Endothelial cell of umbilical vein (primary cell): ENCODE measurements at regions of chr1 and their contacts with region 1.

Region 1: GRCh38 chr1:231421993-231422764 is at the start of gene EGLN1:
- DNase-seq: peak; percentile 95
- H3K4me3 ChIP-seq: peak within 1 kb of the TSS; percentile 63 to 97 (median 91)
- H3K27ac ChIP-seq: peak within 1 kb of the TSS; percentile 89
- H3K4me1 ChIP-seq: peaks cover 43% of the 10 kb centered on the region
- H3K27me3 ChIP-seq: no peaks in the 10 kb centered on the region
- CTCF ChIP-seq: peak; percentile 14 to 33
- POLR2A ChIP-seq: peak; percentile 84
- total RNA-seq, gene EGLN1: 37.4 and 38.1 TPM in 2 replicates

Region 2: DNA sequence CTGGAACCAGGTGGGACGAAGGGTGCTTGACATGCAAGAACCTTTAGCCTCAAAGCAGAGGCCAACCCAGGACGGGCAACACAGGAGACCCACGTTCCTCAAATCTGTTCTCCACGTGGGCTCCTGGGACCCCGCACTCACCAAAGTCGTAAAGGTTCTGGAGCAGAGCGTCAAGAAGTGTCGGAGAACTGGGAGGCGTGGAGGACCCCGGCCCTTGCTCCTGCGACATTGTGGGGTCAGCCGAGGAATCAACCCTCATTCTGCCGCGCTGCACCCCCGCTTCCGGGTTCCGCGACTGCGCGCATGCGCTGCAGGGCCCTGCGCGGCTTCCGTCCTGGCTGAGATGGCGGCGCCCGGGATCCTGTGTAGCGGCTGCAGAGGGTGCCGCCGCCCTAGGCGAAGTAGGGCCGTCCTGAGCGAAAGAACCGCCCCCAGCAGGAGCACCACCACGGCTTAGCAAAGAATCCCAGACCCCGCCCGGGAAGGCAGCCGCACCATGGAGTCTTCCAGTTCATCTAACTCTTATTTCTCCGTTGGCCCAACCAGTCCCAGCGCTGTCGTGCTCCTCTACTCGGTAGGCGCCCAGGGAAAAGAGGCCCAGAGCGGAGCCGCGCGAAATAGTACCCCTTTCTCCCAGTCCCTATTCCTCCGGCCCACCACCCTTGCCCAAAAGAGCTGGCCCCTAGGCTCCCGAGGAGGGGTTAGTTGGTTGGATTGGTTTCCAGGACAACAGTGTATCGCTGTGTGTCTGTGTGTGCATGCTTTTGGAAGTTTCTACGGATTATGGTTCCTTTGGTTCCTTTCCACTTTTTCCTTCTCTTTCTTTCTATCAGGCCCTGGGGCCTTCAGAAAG is 181.1 kb before region 1 on chr1 and contains the start of gene GNPAT:
- CTCF ChIA-PET with region 1: no interaction called
- POLR2A ChIA-PET with region 1: no interaction called
- dilution Hi-C with region 1: no loop called
- intact Hi-C with region 1: loop called (anchors 5 kb)
- DNase-seq: peak; percentile 87
- H3K4me3 ChIP-seq: peak within 1 kb of the TSS; percentile 57 to 97 (median 94)
- H3K27ac ChIP-seq: peak within 1 kb of the TSS; percentile 59
- H3K4me1 ChIP-seq: peaks cover 19% of the 10 kb centered on the region
- H3K27me3 ChIP-seq: no peaks in the 10 kb centered on the region
- CTCF ChIP-seq: no peak
- POLR2A ChIP-seq: peak; percentile 94
- total RNA-seq, gene GNPAT: 44.1 and 51.4 TPM in 2 replicates

Region 3: DNA sequence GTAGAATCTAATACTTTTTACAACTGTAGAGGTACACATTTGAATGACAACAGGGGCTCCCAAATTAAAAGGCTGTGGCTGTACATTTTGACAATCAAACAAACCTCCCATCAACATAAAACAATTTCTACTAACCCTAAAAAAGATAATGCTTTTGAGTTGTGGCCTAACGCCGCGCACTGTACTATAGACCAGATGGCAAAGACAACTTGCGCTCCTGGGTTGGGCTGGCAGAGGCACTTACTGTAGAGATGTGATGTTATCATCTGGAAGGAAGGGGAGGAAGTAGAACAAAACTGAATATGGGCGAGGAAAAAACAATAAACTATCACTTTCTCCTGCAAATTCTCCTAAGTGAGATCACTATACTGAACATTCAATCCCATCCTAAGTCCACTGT is 58.0 kb before region 1 on chr1:
- CTCF ChIA-PET with region 1: interaction called, 39 read pairs
- POLR2A ChIA-PET with region 1: no interaction called
- dilution Hi-C with region 1: no loop called
- intact Hi-C with region 1: no loop called
- DNase-seq: no peak
- H3K4me3 ChIP-seq: no peak overlapping the region
- H3K27ac ChIP-seq: no peak overlapping the region
- H3K4me1 ChIP-seq: no peaks in the 10 kb centered on the region
- H3K27me3 ChIP-seq: no peaks in the 10 kb centered on the region
- CTCF ChIP-seq: no peak
- POLR2A ChIP-seq: no peak

Region 4: GRCh38 chr1:231395076-231395995 is 26.8 kb before region 1 on chr1:
- CTCF ChIA-PET with region 1: interaction called, 4 read pairs
- POLR2A ChIA-PET with region 1: no interaction called
- dilution Hi-C with region 1: no loop called
- intact Hi-C with region 1: loop called (anchors 1 kb)
- DNase-seq: peak; percentile 93
- H3K4me3 ChIP-seq: peak overlapping the region in 1 of 3 experiments; percentile 18
- H3K27ac ChIP-seq: peak overlapping the region; percentile 100
- H3K4me1 ChIP-seq: peaks cover 47% of the 10 kb centered on the region
- H3K27me3 ChIP-seq: no peaks in the 10 kb centered on the region
- CTCF ChIP-seq: no peak
- POLR2A ChIP-seq: peak; percentile 51

Region 5: DNA sequence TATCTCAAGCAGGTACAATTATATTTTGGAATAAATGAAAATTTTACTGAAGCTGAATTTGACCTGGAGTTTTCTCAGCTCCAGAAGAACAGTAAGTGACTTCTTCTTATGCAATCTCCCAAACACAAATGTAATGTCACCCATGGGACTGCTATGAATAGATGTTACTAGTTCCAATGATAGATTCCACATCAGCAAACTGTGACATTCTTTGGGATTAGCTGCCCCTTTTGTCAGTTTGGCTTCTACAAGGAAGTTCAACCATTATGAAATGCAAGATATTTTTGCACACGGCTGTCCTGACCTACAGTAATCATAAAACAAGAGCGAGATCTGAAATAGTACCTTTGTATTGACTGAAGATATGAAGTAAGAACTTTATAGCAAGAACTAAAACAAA is 78.5 kb after region 1 on chr1:
- CTCF ChIA-PET with region 1: no interaction called
- POLR2A ChIA-PET with region 1: no interaction called
- dilution Hi-C with region 1: no loop called
- intact Hi-C with region 1: no loop called
- DNase-seq: no peak
- H3K4me3 ChIP-seq: no peak overlapping the region
- H3K27ac ChIP-seq: no peak overlapping the region
- H3K4me1 ChIP-seq: no peaks in the 10 kb centered on the region
- H3K27me3 ChIP-seq: no peaks in the 10 kb centered on the region
- CTCF ChIP-seq: no peak
- POLR2A ChIP-seq: no peak

Region 6: DNA sequence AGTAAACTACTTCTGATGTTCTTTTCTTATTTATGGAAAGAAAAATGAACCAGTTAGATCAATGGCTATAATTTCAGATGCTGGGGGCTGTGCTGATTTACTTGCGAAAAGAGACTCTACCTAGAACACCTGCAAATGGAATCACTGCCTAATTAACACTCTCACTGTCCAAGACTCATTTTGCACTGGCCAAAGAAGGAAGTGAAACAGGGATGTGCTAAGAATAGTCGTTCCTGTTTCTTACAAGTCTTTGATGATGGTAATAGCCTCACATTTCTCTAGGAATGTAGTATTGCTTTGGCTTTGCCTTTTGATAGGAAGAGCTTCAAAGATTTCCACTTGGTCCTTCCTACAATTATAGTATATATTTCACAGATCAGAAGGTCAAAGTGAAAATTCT is 93.6 kb after region 1 on chr1:
- CTCF ChIA-PET with region 1: no interaction called
- POLR2A ChIA-PET with region 1: no interaction called
- dilution Hi-C with region 1: no loop called
- intact Hi-C with region 1: no loop called
- DNase-seq: no peak
- H3K4me3 ChIP-seq: no peak overlapping the region
- H3K27ac ChIP-seq: no peak overlapping the region
- H3K4me1 ChIP-seq: no peaks in the 10 kb centered on the region
- H3K27me3 ChIP-seq: no peaks in the 10 kb centered on the region
- CTCF ChIP-seq: no peak
- POLR2A ChIP-seq: no peak

Region 7: DNA sequence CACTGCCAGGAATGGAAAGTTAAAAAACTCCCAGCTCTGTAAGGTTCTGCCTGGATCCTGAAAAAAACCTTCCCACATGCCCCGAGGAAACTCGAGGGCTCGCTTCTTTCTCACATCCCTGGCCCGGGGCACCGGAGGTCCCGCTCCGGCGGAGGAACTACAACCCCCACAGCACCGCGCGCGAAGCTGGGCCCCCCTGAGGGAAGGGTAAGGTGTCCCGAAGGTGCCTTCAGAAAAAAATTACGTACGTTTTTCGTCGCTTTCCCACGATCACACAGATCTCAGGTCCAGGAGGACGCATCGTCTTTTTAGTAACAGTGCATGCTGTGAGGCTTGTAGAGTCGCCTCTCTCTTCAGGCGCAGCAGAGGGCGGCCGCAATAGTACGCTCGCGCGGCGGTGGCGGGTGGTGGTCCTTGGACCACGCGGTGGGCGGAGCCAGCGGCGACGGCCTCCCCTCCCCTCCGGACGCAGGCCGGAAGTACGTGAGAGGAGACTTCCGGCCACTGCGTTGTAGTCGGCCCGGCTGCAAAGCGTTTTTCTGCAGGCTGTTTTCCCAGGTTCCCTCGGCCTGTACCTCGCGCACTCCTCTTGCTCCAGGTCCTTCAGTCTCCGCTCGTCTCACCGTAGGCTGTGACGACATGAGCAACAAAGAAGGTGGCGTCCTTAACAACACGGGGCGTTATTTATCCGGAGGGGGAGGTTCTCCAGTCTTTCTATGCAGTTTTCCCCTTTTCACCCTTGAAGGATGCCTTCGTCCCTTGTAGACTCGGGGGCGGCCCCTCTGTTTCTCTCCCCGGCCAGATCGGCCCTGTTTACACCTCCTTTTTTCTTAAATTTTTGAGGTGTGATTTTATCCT is 106.2 kb after region 1 on chr1 and contains the start of gene TSNAX:
- CTCF ChIA-PET with region 1: interaction called, 5 read pairs
- POLR2A ChIA-PET with region 1: interaction called, 4 read pairs
- dilution Hi-C with region 1: no loop called
- intact Hi-C with region 1: loop called (anchors 1 kb)
- DNase-seq: peak; percentile 97
- H3K4me3 ChIP-seq: peak within 1 kb of the TSS; percentile 35 to 75 (median 45)
- H3K27ac ChIP-seq: peak within 1 kb of the TSS; percentile 86
- H3K4me1 ChIP-seq: peaks cover 15% of the 10 kb centered on the region
- H3K27me3 ChIP-seq: no peaks in the 10 kb centered on the region
- CTCF ChIP-seq: no peak
- POLR2A ChIP-seq: peak; percentile 94
- total RNA-seq, gene TSNAX: 26.3 and 26.4 TPM in 2 replicates

Region 8: GRCh38 chr1:231590453-231591198 is 168.4 kb after region 1 on chr1:
- CTCF ChIA-PET with region 1: interaction called, 8 read pairs
- POLR2A ChIA-PET with region 1: no interaction called
- dilution Hi-C with region 1: no loop called
- intact Hi-C with region 1: loop called (anchors 1 kb)
- DNase-seq: peak; percentile 78
- H3K4me3 ChIP-seq: no peak overlapping the region
- H3K27ac ChIP-seq: no peak overlapping the region
- H3K4me1 ChIP-seq: no peaks in the 10 kb centered on the region
- H3K27me3 ChIP-seq: no peaks in the 10 kb centered on the region
- CTCF ChIP-seq: peak; percentile 69 to 81
- POLR2A ChIP-seq: no peak